ENCODE measurements at regions of chr5 and their contacts with region 1.

Region 1: DNA sequence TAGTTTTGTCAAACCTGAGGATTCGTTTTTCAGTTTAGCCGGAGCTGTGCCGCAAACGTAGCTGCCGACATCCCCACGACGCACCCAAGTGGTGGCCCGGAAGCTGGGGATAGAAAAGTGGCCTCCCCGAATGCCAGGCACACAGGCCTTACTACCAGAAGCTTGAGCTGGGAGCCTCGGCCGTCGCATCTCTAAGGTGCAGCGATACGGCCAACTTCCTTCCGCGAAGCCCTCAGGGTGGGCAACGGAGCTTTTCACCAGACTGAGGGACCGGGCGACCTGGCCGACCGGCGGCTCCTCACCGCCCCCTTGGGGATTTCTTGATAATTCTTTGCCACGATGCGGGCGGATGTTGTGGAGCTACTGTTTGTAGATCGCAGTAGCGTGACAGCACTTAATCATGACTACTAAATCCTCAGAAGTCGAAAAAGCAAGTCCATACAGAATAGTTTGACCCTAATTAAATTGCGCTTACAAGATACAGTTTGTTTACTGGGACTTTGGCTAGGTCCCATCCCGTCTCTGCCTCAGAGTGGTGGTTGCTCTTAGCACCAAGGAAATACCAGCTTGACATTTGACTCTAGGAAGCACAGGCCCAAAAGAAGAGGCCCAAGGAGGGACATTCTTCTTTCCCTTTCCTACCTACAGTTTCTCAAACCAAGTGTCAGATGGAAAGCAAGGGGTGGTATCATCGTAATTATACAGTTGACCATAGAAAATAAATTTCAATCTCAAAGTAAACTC is 613 bp upstream of the TMEM267 start:
- DNase-seq: peak; percentile 92
- ATAC-seq: peak; percentile 73
- H3K4me3 Mint-ChIP-seq: peak overlapping the region; percentile 97
- H3K27ac Mint-ChIP-seq: peak overlapping the region; percentile 100
- H3K4me1 Mint-ChIP-seq: peaks cover 37% of the 10 kb centered on the region
- H3K27me3 Mint-ChIP-seq: no peaks in the 10 kb centered on the region

Region 2: GRCh38 chr5:42994246-42995151 is 489.8 kb before region 1 on chr5:
- CTCF ChIA-PET with region 1: interaction called, 4 read pairs
- POLR2A ChIA-PET with region 1: interaction called, 4 read pairs
- intact Hi-C with region 1: loop called (anchors 2 to 5 kb)
- DNase-seq: peak; percentile 93
- ATAC-seq: peak; percentile 67
- H3K4me3 Mint-ChIP-seq: peak overlapping the region; percentile 98
- H3K27ac Mint-ChIP-seq: peak overlapping the region; percentile 100
- H3K4me1 Mint-ChIP-seq: peaks cover 25% of the 10 kb centered on the region
- H3K27me3 Mint-ChIP-seq: no peaks in the 10 kb centered on the region

Region 3: GRCh38 chr5:43073597-43074546 is 410.4 kb before region 1 on chr5:
- CTCF ChIA-PET with region 1: interaction called, 4 read pairs
- POLR2A ChIA-PET with region 1: interaction called, 4 read pairs
- intact Hi-C with region 1: loop called in 1 of 2 experiments (anchors 2 kb)
- DNase-seq: peak; percentile 69
- ATAC-seq: peak; percentile 78
- H3K4me3 Mint-ChIP-seq: no peak overlapping the region
- H3K27ac Mint-ChIP-seq: no peak overlapping the region
- H3K4me1 Mint-ChIP-seq: peaks cover 38% of the 10 kb centered on the region
- H3K27me3 Mint-ChIP-seq: no peaks in the 10 kb centered on the region

Region 4: DNA sequence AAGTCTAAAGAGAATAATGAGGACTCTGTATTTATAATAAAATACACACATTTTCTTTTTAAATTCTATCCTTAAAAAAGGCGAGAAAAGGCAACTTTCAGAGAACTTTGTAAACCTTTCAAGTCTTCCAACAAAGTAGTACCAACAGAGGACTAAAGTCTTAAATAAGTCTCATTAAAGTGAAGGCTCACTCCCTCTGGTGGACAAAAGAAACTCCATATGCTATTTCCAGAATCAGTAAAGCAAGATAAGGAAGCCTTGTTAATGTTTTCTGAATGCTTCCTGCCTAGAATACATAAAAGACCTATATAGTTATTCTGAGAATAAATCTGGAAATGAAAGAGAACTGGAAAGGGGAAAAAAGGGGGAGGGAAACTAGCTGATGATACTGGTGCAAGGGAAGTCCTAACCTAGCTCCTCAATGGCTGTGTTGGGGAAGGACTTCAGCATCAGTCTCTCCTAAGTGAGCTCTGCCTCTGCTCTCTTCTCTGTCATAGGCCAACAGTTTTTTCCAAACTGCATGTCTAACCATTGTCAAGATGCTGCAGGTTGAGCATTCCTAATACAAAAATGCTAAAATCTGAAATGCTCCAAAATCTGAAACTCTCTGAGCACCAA is 178.2 kb before region 1 on chr5:
- CTCF ChIA-PET with region 1: interaction called, 3 read pairs
- POLR2A ChIA-PET with region 1: no interaction called
- intact Hi-C with region 1: loop called in 1 of 2 experiments (anchors 2 kb)
- DNase-seq: no peak
- ATAC-seq: peak; percentile 37
- H3K4me3 Mint-ChIP-seq: peak overlapping the region; percentile 12
- H3K27ac Mint-ChIP-seq: peak overlapping the region; percentile 63
- H3K4me1 Mint-ChIP-seq: peaks cover 80% of the 10 kb centered on the region
- H3K27me3 Mint-ChIP-seq: no peaks in the 10 kb centered on the region

Region 5: DNA sequence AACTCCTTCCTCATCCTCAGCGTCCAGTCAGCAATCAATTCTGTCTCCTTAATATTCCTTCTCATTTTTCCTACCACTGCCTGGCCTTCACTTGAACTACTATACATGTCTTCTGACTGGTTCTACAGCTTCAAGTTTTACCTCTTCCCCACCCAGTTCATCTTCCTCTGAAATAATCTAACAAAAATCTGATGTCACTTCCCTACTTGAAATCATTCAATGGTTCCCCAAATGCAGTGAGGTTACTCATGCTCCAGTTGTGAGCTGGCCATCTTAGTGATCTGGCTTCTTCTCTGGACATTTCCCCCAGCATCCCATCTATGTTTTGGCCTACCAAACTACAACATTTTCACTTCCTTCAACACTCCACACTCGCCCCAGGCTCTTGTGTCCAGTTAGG is 14.3 kb after region 1 on chr5:
- CTCF ChIA-PET with region 1: interaction called, 10 read pairs
- POLR2A ChIA-PET with region 1: no interaction called
- intact Hi-C with region 1: no loop called
- DNase-seq: no peak
- ATAC-seq: no peak
- H3K4me3 Mint-ChIP-seq: no peak overlapping the region
- H3K27ac Mint-ChIP-seq: no peak overlapping the region
- H3K4me1 Mint-ChIP-seq: no peaks in the 10 kb centered on the region
- H3K27me3 Mint-ChIP-seq: no peaks in the 10 kb centered on the region

Region 6: GRCh38 chr5:43602461-43603343 is 118.4 kb after region 1 on chr5 and contains the start of gene NNT:
- CTCF ChIA-PET with region 1: interaction called, 15 read pairs
- POLR2A ChIA-PET with region 1: interaction called, 18 read pairs
- intact Hi-C with region 1: loop called (anchors 1 to 2 kb)
- DNase-seq: peak; percentile 89
- ATAC-seq: peak; percentile 76
- H3K4me3 Mint-ChIP-seq: peak within 1 kb of the TSS; percentile 95
- H3K27ac Mint-ChIP-seq: peak within 1 kb of the TSS; percentile 93
- H3K4me1 Mint-ChIP-seq: peaks cover 29% of the 10 kb centered on the region
- H3K27me3 Mint-ChIP-seq: no peaks in the 10 kb centered on the region
- total RNA-seq, gene NNT: 55.4 to 77.5 TPM

Measured in activated CD4-positive, alpha-beta T cell treated with anti-CD3 and anti-CD28 coated beads for 36 hours (primary cell).